Right ventricle myocardium inferior (tissue), 1 donor: ENCODE measurements at regions of chr5 and their contacts with region 1.

Region 1: DNA sequence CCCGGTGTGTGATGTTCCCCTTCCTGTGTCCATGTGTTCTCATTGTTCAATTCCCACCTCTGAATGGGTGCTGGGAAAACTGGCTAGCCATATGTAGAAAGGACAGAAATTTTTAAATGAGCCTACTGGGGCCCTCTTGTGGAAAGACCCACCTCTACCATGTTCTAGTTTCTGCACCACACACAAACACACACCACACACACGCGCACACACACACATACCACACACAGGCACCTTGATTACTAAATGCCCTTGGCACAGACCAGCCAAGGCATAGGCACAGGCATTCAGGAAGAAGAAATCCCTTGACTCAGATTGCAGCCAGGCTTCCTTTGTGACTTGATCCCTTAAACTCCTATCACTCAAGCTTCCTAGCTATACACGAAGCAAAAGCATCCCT is 60.5 kb downstream of the SIL1 start:
- DNase-seq: no peak
- ATAC-seq: no peak

Region 2: GRCh38 chr5:138975098-138975847 is 162.4 kb before region 1 on chr5:
- intact Hi-C with region 1: loop called (anchors 10 kb)
- DNase-seq: no peak
- ATAC-seq: peak; percentile 27

Region 3: DNA sequence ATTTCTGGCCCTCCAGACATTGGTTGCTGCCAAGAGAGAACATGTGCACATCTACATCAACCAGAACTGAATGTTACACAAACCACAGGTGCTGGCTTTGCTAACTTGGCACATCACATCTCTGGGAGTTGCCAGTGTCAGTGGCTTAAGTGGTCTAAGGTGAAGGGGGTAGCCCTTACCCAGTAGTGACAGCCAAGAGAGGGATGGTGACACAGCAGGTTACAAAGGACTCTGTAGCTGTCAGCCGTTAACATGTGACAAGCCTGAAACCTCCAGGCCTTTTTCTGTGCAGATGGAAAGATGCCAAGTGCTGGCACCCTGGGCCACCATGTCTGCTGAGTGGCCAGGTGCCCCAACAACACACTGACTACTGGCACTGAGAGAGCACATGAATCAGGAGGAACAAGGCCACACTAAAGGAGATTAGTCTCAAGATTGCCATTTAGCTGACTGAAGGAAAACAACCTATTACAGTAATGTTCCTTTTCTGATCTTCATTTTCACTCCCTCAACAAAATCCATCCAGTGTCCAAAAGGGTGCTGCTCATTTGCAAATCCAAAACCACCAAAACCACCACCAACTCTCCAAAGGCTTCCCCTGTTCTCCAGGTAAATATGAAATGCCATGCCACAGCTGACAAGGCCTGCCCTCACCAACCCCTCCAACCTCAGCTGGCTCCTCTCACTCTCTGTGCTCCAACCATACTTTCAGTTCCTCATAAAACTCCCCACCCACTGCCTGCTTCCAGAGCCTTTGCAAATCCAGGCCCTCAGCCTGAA is 40.3 kb after region 1 on chr5:
- intact Hi-C with region 1: loop called (anchors 5 kb)
- DNase-seq: peak; percentile 72
- ATAC-seq: peak; percentile 94

Region 4: GRCh38 chr5:139197710-139198669 is 60.3 kb after region 1 on chr5 and contains the start of gene SIL1:
- intact Hi-C with region 1: loop called (anchors 5 kb)
- DNase-seq: peak; percentile 99
- ATAC-seq: peak; percentile 99
- total RNA-seq, gene SIL1: 46.2 TPM

Region 5: GRCh38 chr5:139268364-139269202 is 130.9 kb after region 1 on chr5:
- intact Hi-C with region 1: loop called (anchors 5 kb)
- DNase-seq: no peak
- ATAC-seq: no peak

Region 6: DNA sequence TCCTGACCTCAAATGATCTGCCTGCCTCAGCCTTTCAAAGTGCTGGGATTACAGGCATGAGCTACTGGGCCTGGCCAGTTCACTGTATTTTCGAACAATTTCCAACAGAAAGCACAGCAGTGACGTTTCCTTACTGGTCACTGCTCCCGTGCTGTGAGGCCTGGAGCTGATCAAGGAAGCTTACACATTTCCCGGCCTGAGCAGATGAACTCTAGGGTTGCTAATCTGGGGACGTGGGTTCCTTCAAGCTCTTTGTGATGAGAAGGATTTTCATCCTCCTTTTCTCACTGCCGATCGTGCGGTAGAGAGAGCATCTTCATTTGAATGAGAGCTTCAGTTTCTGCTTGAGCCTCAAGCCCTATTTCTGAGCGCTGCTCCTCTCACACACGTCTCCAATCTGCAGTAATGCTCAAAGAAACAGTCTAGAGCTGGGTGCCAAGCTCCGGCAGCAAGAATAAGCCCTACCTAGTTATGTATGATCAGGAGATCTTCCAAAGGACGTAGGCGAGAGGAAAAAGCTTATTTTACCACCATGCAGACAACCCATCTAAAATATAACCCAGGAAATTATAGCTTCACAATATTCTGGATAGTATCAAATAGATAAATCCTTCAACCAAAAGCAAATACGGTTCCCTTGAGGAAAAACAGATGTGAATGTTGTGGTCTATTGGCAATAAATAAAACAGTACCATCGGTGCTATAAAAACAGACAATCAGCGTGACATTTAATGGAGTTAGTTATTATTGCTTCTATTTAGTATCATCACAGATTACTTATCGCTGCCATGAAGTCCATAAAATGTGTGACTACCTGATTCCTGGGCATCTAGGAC is 273.5 kb after region 1 on chr5:
- intact Hi-C with region 1: no loop called
- DNase-seq: no peak
- ATAC-seq: no peak